Activated CD8-positive, alpha-beta memory T cell treated with anti-CD3 and anti-CD28 coated beads, Interleukin-2, amount 10 ng/mL, durations not matched to agents 7 days and 5 days (primary cell): ENCODE measurements at regions of chr1 and their contacts with region 1.

Region 1: DNA sequence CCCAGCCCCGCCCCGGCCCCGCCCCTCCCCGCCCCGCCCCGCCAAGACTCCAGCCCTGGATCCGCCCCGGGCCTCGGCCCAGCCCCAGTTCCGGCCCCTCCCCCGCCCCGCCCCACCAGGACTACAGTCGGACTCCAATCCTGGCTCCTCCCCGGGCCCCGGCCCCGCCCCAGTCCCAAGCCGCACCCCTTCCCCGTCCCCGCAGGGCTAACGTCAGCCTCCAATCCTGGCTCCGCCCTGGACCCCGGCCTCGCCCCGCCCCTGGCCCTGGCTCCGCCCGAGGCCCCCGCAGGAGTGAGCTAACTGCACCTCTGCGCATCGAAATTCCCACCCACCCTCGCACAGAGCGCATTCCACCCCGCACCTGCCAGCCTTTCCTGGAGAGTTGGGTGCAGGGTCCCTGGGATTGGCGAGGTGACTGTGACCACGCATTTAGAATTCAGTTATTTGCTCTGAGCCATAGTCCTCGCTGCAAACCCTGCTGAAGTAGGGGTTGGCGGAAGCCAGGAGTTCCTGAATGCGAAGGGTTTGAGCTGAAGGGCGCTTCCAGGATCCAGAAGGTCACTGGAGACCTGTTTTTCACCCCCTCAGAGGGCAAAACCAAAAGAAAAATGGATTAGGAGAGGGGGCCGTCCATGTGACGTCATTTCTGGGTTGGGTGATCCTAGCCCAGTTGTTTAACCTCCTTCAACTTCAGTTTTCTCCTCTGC is 588 bp upstream of the IGSF8 start:
- DNase-seq: peak; percentile 99
- ATAC-seq: peak; percentile 89
- H3K4me3 Mint-ChIP-seq: peak overlapping the region; percentile 70
- H3K27ac Mint-ChIP-seq: peak overlapping the region; percentile 84
- H3K4me1 Mint-ChIP-seq: peaks cover 38% of the 10 kb centered on the region
- H3K27me3 Mint-ChIP-seq: no peaks in the 10 kb centered on the region

Region 2: GRCh38 chr1:160078512-160079195 is 20.4 kb before region 1 on chr1:
- CTCF ChIA-PET with region 1: interaction called, 633 read pairs
- DNase-seq: peak; percentile 77
- ATAC-seq: peak; percentile 89
- H3K4me3 Mint-ChIP-seq: no peak overlapping the region
- H3K27ac Mint-ChIP-seq: no peak overlapping the region
- H3K4me1 Mint-ChIP-seq: peaks cover 4% of the 10 kb centered on the region
- H3K27me3 Mint-ChIP-seq: peaks cover 60% of the 10 kb centered on the region

Region 3: DNA sequence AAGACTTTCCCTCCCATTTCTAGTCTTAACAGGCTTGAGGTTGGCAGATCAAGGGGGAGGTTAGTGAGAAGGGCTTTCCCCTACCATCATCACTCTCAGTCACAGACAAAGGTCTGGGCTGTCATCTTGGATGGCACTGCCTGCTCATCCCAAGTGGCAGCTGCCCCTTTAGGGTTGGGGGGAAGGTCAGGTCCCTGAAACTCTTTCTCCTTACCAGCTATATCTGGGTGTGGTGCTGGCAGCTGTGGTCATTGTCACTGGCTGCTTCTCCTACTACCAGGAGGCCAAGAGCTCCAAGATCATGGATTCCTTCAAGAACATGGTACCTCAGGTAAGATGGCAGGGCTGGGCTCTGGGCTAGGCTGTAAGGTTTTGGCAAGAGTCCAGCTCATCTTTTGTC is 24.7 kb after region 1 on chr1:
- CTCF ChIA-PET with region 1: no interaction called
- DNase-seq: no peak
- ATAC-seq: no peak
- H3K4me3 Mint-ChIP-seq: no peak overlapping the region
- H3K27ac Mint-ChIP-seq: no peak overlapping the region
- H3K4me1 Mint-ChIP-seq: no peaks in the 10 kb centered on the region
- H3K27me3 Mint-ChIP-seq: peaks cover 3% of the 10 kb centered on the region

Region 4: DNA sequence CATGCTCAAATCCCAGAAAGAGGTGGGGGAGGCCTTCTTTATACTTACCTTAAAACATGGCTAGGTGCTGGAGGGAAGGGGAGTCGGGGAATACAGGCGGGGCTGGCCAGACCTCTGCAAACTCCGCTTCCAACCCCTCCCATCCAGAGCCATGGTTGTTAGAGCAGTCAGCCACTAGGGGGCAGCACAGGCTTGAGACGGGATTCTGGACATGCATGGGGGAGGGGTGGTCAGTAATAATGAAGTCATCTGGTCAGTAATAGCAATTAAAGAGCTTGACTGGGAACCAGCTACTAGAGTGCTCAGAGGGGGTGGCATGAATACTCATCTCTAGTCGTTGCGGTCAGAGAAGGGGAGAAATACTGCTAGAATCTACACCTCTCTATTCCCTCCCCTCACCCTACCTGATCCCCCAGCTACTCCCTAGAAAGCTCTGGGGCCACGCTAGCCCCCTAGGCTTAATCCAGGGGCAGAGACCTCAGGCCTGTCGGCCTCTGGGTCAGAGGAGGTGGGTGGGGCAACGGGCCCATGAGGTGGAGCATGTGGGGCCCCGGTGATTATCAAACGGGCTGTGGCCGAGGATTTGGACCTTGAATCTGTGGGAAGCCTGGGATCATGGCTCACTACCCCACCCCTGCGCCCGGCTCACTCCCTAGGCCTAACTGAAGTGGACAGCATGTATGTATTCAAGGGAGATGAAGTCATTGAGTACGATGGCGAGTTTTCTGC is 94.2 kb after region 1 on chr1:
- CTCF ChIA-PET with region 1: interaction called, 10 read pairs
- DNase-seq: peak; percentile 84
- ATAC-seq: peak; percentile 73
- H3K4me3 Mint-ChIP-seq: no peak overlapping the region
- H3K27ac Mint-ChIP-seq: no peak overlapping the region
- H3K4me1 Mint-ChIP-seq: no peaks in the 10 kb centered on the region
- H3K27me3 Mint-ChIP-seq: no peaks in the 10 kb centered on the region

Region 5: DNA sequence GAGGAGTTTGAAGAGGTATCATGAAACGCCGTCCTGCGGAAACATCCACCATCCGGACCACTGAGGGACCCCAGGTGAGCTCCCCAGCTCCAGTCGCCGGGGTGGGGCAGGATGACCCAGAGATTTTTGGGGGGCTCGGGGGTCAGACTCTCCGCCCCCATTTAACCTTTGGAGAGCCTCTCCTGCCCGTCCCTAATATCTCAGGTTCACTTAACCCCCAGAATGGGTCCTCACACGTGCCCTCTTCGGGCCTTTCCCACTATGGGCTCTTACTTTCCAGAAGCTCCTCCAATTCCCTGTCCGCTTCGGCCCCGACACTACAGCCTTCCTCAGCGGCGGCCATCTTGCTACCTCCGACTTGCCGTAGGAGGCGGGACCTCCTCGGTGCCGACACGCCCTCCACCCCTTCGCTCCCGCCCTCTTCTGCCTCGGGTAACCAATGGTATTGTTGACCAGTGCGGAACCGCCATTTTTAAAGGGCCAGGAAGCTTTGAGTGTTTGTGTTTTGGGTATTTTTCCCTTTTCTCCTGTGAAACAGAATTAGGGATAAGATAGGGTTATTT is 185.9 kb after region 1 on chr1 and contains the start of gene PEX19:
- CTCF ChIA-PET with region 1: interaction called, 11 read pairs
- DNase-seq: peak; percentile 97
- ATAC-seq: peak; percentile 100
- H3K4me3 Mint-ChIP-seq: peak within 1 kb of the TSS; percentile 100
- H3K27ac Mint-ChIP-seq: peak within 1 kb of the TSS; percentile 93
- H3K4me1 Mint-ChIP-seq: peaks cover 19% of the 10 kb centered on the region
- H3K27me3 Mint-ChIP-seq: no peaks in the 10 kb centered on the region
- total RNA-seq, gene PEX19: 49.4 to 54.4 TPM